CD8-positive, alpha-beta T cell (primary cell): ENCODE measurements at regions of chr5 and their contacts with region 1.

Region 1: DNA sequence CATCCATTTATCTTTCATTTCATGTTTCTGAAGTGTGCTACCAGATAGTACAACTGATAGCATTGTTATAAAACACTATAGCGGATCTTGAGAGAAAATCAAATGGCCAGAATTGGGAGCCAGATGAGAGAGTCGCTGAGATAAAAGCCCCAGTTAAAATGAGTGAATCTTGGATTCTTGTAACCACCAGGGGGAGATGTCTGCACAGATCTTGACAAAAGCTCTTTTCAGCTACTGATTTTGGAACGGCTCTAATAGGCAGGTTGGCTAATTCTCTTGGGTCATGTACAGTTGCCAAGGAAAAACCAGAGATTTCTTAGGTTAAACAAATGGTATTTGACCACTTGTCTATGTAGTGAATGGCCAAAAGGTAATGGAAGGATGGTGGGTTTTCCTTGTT is 21.7 kb downstream of the F2RL2 start:
- DNase-seq: peak in 4 of 9 experiments; percentile 14 to 74 (median 42)
- ATAC-seq: peak; percentile 69
- H3K4me3 ChIP-seq: no peak overlapping the region
- H3K4me3 Mint-ChIP-seq: no peak overlapping the region
- H3K27ac ChIP-seq: no peak overlapping the region
- H3K27ac Mint-ChIP-seq: no peak overlapping the region
- H3K4me1 ChIP-seq: no peaks in the 10 kb centered on the region
- H3K4me1 Mint-ChIP-seq: no peaks in the 10 kb centered on the region
- H3K27me3 ChIP-seq: no peaks in the 10 kb centered on the region
- H3K27me3 Mint-ChIP-seq: no peaks in the 10 kb centered on the region
- CTCF ChIP-seq: peak; percentile 69

Region 2: GRCh38 chr5:76016258-76016657 is 585.2 kb before region 1 on chr5:
- CTCF ChIA-PET with region 1: no interaction called
- POLR2A ChIA-PET with region 1: no interaction called
- intact Hi-C with region 1: no loop called
- DNase-seq: peak in 1 of 9 experiments; percentile 3
- ATAC-seq: no peak
- H3K4me3 ChIP-seq: no peak overlapping the region
- H3K4me3 Mint-ChIP-seq: no peak overlapping the region
- H3K27ac ChIP-seq: no peak overlapping the region
- H3K27ac Mint-ChIP-seq: no peak overlapping the region
- H3K4me1 ChIP-seq: no peaks in the 10 kb centered on the region
- H3K4me1 Mint-ChIP-seq: no peaks in the 10 kb centered on the region
- H3K27me3 ChIP-seq: no peaks in the 10 kb centered on the region
- H3K27me3 Mint-ChIP-seq: peaks cover 29% of the 10 kb centered on the region
- CTCF ChIP-seq: no peak

Region 3: GRCh38 chr5:76849419-76850291 is 248.2 kb after region 1 on chr5 and contains the start of gene S100Z:
- CTCF ChIA-PET with region 1: no interaction called
- POLR2A ChIA-PET with region 1: no interaction called
- intact Hi-C with region 1: no loop called
- DNase-seq: peak in 6 of 9 experiments; percentile 6 to 41 (median 15)
- ATAC-seq: peak; percentile 69
- H3K4me3 ChIP-seq: no peak within 1 kb of the TSS
- H3K4me3 Mint-ChIP-seq: peak within 1 kb of the TSS; percentile 62
- H3K27ac ChIP-seq: no peak within 1 kb of the TSS
- H3K27ac Mint-ChIP-seq: peak within 1 kb of the TSS; percentile 58
- H3K4me1 ChIP-seq: peaks cover 7% of the 10 kb centered on the region
- H3K4me1 Mint-ChIP-seq: peaks cover 23% of the 10 kb centered on the region
- H3K27me3 ChIP-seq: no peaks in the 10 kb centered on the region
- H3K27me3 Mint-ChIP-seq: no peaks in the 10 kb centered on the region
- CTCF ChIP-seq: no peak
- total RNA-seq, gene S100Z: not detected

Region 4: GRCh38 chr5:77024490-77024889 is 423.0 kb after region 1 on chr5:
- CTCF ChIA-PET with region 1: no interaction called
- POLR2A ChIA-PET with region 1: no interaction called
- intact Hi-C with region 1: loop called in 1 of 2 experiments (anchors 5 kb)
- DNase-seq: no peak
- ATAC-seq: no peak
- H3K4me3 ChIP-seq: no peak overlapping the region
- H3K4me3 Mint-ChIP-seq: no peak overlapping the region
- H3K27ac ChIP-seq: no peak overlapping the region
- H3K27ac Mint-ChIP-seq: no peak overlapping the region
- H3K4me1 ChIP-seq: peaks cover 1% of the 10 kb centered on the region
- H3K4me1 Mint-ChIP-seq: peaks cover 2% of the 10 kb centered on the region
- H3K27me3 ChIP-seq: peaks cover 0 to 3% of the 10 kb centered on the region in 2 experiments
- H3K27me3 Mint-ChIP-seq: peaks cover 21% of the 10 kb centered on the region
- CTCF ChIP-seq: no peak